Activated CD4-positive, alpha-beta T cell treated with anti-CD3 and anti-CD28 coated beads, Interleukin-2, amount 10 ng/mL, durations not matched to agents 24 days and 14 days (primary cell): ENCODE measurements at regions of chr1 and their contacts with region 1.

Region 1: DNA sequence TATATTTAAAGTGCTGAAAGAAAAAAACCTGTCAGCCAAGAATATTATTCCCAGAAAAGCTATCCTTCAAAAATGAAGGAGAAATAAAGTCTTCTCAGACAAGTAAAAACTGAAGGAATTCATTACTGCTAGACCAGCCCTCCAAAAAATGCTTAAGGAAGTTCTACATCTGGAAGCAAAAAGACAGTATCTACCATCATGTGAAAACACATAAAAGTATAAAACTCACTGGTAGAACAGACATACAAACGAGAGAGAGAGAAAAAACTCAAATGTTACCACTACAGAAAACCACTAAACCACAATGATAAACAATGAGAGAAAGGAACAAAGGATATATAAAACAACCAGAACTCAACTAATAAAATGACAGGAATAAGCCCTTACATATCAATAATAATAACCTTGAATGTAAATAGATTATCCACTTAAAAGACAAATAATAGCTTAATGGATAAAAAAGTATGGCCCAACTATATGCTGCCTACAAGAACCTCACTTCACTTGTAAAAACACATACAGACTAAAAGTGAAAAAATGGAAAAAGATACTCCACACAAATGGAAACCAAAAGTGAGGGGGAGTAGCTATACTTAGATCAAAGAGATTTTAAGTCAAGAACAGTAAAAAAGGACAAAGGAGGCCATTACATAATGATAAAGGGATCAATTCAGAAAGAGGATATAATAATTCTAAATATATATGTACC is 22.0 kb downstream of the NSL1 start:
- DNase-seq: no peak
- H3K4me3 Mint-ChIP-seq: peak overlapping the region; percentile 50
- H3K27ac Mint-ChIP-seq: peak overlapping the region; percentile 81
- H3K4me1 Mint-ChIP-seq: peaks cover 44% of the 10 kb centered on the region
- H3K27me3 Mint-ChIP-seq: no peaks in the 10 kb centered on the region

Region 2: GRCh38 chr1:212712451-212713303 is 56.9 kb before region 1 on chr1:
- intact Hi-C with region 1: loop called (anchors 2 kb)
- DNase-seq: no peak
- H3K4me3 Mint-ChIP-seq: no peak overlapping the region
- H3K27ac Mint-ChIP-seq: peak overlapping the region; percentile 56
- H3K4me1 Mint-ChIP-seq: peaks cover 26% of the 10 kb centered on the region
- H3K27me3 Mint-ChIP-seq: peaks cover 9% of the 10 kb centered on the region

Region 3: GRCh38 chr1:212721388-212722247 is 48.0 kb before region 1 on chr1:
- intact Hi-C with region 1: loop called (anchors 1 kb)
- DNase-seq: peak; percentile 83
- H3K4me3 Mint-ChIP-seq: peak overlapping the region; percentile 69
- H3K27ac Mint-ChIP-seq: peak overlapping the region; percentile 78
- H3K4me1 Mint-ChIP-seq: peaks cover 34% of the 10 kb centered on the region
- H3K27me3 Mint-ChIP-seq: peaks cover 14% of the 10 kb centered on the region

Region 4: GRCh38 chr1:212853658-212854057 is 84.0 kb after region 1 on chr1:
- intact Hi-C with region 1: no loop called
- DNase-seq: no peak
- H3K4me3 Mint-ChIP-seq: no peak overlapping the region
- H3K27ac Mint-ChIP-seq: no peak overlapping the region
- H3K4me1 Mint-ChIP-seq: peaks cover 10% of the 10 kb centered on the region
- H3K27me3 Mint-ChIP-seq: no peaks in the 10 kb centered on the region

Region 5: DNA sequence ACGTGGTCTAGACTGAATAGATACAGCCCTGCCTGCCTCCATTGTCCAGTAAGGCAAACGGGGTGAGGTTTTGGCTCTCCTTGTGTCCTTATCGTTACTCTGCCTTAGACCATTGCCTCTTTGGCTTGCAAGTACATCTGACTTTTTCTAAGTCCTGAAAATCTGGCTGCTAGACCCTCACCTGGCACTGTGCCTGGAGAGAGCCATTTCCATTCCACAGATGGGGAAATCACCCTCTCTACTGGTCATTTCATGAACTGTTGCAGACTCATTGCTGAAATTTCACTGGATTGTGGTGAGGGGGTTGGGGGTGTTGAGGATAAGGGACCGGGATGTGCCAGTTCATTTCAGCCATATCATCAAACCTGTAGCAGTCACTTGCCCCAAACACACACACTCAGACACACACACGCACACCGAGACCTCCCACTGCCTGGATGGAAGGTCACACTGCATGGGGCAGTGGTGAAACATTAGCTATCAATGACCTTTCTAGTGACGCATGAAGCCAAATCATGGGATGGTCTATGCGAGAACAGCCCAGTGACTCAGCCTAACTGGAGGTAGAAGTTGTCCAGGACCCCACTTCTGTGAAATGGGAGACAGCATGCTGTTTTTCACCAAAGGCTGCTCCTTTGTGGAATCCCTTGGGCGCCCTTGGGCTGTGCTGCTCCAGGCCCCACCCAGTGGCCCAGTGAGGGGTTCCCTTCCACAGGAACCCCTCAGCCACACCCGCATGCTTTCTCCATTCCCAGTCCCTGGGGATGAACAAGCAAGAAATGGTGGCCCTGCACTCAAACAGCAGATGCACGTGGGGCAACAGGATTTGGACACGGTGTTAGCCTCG is 145.9 kb after region 1 on chr1:
- intact Hi-C with region 1: no loop called
- DNase-seq: no peak
- H3K4me3 Mint-ChIP-seq: no peak overlapping the region
- H3K27ac Mint-ChIP-seq: no peak overlapping the region
- H3K4me1 Mint-ChIP-seq: peaks cover 3% of the 10 kb centered on the region
- H3K27me3 Mint-ChIP-seq: peaks cover 13% of the 10 kb centered on the region